ENCODE measurements at regions of chr12 and their contacts with region 1.

Region 1: GRCh38 chr12:20472102-20472782 is 103.9 kb downstream of the PDE3A start:
- DNase-seq: no peak
- H3K4me3 ChIP-seq: no peak overlapping the region
- H3K27ac ChIP-seq: peak overlapping the region; percentile 52 to 66
- H3K4me1 ChIP-seq: peaks cover 6 to 19% of the 10 kb centered on the region in 2 donors
- H3K27me3 ChIP-seq: no peaks in the 10 kb centered on the region
- CTCF ChIP-seq: no peak

Region 2: GRCh38 chr12:20549107-20549719 is 77.0 kb after region 1 on chr12:
- intact Hi-C with region 1: loop called (anchors 5 kb)
- DNase-seq: no peak
- H3K4me3 ChIP-seq: peak overlapping the region in 1 of 2 donors; percentile 43
- H3K27ac ChIP-seq: peak overlapping the region in 1 of 2 donors; percentile 66
- H3K4me1 ChIP-seq: peaks cover 0 to 14% of the 10 kb centered on the region in 2 donors
- H3K27me3 ChIP-seq: no peaks in the 10 kb centered on the region
- CTCF ChIP-seq: peak; percentile 55 to 65 (median 56)

Region 3: GRCh38 chr12:20561871-20562270 is 89.6 kb after region 1 on chr12:
- intact Hi-C with region 1: no loop called
- DNase-seq: no peak
- H3K4me3 ChIP-seq: peak overlapping the region in 1 of 2 donors; percentile 55
- H3K27ac ChIP-seq: peak overlapping the region; percentile 30 to 83
- H3K4me1 ChIP-seq: peaks cover 0 to 23% of the 10 kb centered on the region in 2 donors
- H3K27me3 ChIP-seq: no peaks in the 10 kb centered on the region
- CTCF ChIP-seq: no peak

Region 4: GRCh38 chr12:20731274-20731673 is 259.0 kb after region 1 on chr12:
- intact Hi-C with region 1: no loop called
- DNase-seq: no peak
- H3K4me3 ChIP-seq: no peak overlapping the region
- H3K27ac ChIP-seq: no peak overlapping the region
- H3K4me1 ChIP-seq: no peaks in the 10 kb centered on the region
- H3K27me3 ChIP-seq: no peaks in the 10 kb centered on the region
- CTCF ChIP-seq: peak in 1 of 3 experiments; percentile 26